ENCODE measurements at regions of chr5 and their contacts with region 1.

Region 1: DNA sequence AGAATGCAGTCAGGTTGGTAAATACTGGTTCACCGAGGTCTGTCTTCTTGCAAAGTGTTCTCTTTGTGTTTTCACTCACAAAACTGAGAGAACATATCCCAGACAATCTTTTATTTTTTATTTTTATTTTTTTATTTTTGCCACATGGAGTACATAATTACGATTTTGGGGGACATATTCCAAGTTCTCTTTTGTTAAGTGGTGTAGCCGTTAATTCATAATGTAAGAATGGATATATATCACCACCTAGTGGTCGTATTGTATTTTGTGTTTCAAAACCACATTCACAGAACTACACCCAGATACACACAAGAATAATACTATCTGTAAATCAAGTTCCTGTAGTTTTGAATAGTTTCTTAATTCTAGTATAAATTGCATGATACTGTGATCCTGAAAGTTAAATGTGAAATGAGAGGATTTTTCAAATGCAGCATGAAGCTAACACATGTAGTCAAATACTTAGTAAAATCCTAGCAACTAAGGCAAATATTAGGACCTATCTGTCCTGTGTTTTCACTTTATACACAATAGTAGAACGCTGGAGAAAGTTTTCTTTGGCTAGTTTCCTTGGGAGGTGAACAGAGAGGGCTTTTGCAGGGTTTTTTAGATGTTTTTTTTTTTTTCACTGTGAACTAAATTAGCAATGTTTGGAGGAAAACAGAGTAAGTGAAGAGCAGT is 92.7 kb downstream of the VCAN start:
- DNase-seq: no peak
- ATAC-seq: peak; percentile 68

Region 2: GRCh38 chr5:82312373-82312856 is 1251.8 kb before region 1 on chr5:
- intact Hi-C with region 1: loop called (anchors 10 kb)
- DNase-seq: peak; percentile 78
- ATAC-seq: peak; percentile 93

Region 3: DNA sequence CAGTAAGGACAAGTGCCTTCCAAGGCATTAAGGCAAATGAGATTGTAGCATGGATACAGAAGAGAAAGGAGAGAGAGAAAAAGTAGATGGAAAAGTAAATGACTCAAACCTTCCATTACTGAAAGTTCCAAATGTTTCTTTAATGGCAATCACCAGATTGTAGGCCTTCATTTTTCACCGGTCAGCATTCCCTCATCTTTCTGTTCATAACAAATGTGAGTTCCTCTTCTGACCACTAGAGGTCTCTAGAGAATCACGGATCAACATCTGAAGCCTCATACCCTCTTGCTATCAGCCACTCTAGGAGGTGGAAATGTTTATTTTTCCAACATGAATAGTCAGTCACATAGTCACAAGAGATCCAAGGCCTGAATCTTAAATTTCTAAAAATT is 1212.5 kb before region 1 on chr5:
- intact Hi-C with region 1: loop called (anchors 5 kb)
- DNase-seq: no peak
- ATAC-seq: peak; percentile 75

Region 4: GRCh38 chr5:82641331-82642003 is 922.7 kb before region 1 on chr5:
- intact Hi-C with region 1: loop called (anchors 10 kb)
- DNase-seq: peak; percentile 59
- ATAC-seq: peak; percentile 98

Region 5: DNA sequence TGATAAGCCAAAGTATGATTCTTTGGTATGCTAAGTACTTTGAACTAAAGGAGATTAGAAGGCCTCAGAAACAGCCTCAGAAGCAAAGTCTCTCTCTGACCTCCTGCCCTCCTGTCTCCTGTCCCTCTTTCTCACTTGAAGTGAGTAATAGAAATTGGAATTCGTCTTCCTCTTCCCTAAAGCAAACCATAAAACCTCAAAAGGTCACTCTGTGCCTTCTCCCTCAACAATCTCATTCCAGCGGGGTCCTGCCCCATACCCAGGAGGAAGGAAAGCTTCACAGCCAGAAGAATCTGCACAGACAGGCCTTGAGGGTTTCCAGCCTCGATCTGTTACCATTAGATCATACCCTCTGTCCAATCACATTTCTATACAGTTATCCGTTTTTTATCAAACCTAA is 68.7 kb after region 1 on chr5:
- intact Hi-C with region 1: no loop called
- DNase-seq: no peak
- ATAC-seq: no peak

Region 6: DNA sequence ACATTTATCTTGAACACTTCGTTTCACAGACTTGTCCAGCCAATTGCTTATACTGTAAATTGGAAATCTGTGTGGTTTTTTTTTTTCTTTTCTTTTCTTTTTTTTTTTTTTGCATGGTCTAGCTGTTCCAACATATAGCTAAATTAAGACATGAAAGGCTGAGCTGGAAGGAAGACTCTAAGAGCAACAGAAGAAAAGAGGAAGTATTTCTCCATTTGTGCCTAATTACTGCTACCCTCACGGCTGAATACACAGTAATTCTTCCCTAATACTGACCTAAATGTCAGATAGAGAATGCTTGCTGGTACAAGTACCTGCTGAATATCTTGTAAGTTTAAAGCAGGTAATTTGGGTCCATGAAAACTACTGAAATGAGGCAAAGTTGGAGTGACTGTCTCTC is 167.4 kb after region 1 on chr5:
- intact Hi-C with region 1: no loop called
- DNase-seq: no peak
- ATAC-seq: no peak